ENCODE measurements at regions of chr4 and their contacts with region 1.

Region 1: GRCh38 chr4:98143001-98143899 is at the start of gene STPG2:
- DNase-seq: peak; percentile 86
- ATAC-seq: peak; percentile 97
- H3K4me3 ChIP-seq: peak within 1 kb of the TSS; percentile 71
- H3K27ac ChIP-seq: peak within 1 kb of the TSS; percentile 81
- H3K4me1 ChIP-seq: peaks cover 17% of the 10 kb centered on the region
- H3K27me3 ChIP-seq: no peaks in the 10 kb centered on the region
- CTCF ChIP-seq: peak; percentile 69
- total RNA-seq, gene STPG2: 0.40 TPM in 1 of 2 replicates, not detected in the other

Region 2: DNA sequence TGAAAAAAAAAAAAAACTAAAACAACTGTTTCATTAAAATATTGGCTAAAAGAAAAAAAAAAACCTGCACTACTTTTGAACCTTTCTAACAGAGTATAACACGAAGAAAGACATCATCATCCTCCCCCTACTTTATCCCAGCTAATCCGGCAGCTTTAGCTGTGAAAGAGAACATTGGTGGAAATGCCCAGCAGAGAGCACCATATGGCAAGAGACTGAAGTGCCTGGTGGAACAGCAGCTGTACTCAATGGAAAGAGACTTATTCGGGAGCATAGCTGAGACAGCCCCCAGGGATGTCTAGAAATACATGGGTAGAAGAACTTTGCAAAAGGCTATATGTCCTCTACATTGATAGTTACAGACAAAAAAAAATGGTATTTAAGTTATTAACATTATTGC is 30.2 kb before region 1 on chr4:
- CTCF ChIA-PET with region 1: interaction called, 8 read pairs
- POLR2A ChIA-PET with region 1: no interaction called
- intact Hi-C with region 1: loop called (anchors 1 kb)
- DNase-seq: peak; percentile 51
- ATAC-seq: peak; percentile 84
- H3K4me3 ChIP-seq: no peak overlapping the region
- H3K27ac ChIP-seq: no peak overlapping the region
- H3K4me1 ChIP-seq: no peaks in the 10 kb centered on the region
- H3K27me3 ChIP-seq: no peaks in the 10 kb centered on the region
- CTCF ChIP-seq: peak; percentile 67